ENCODE measurements at regions of chr22 and their contacts with region 1.

Region 1: GRCh38 chr22:35631597-35631996 is 14.5 kb upstream of the MB start:
- DNase-seq: peak; percentile 47 to 85
- H3K4me3 ChIP-seq: no peak overlapping the region
- H3K27ac ChIP-seq: no peak overlapping the region
- H3K4me1 ChIP-seq: peaks cover 0 to 18% (median 7%) of the 10 kb centered on the region in 4 experiments; a peak in 6 of 7 replicates
- H3K27me3 ChIP-seq: peaks cover 0 to 2% (median 0%) of the 10 kb centered on the region in 4 experiments; a peak in 1 of 7 replicates
- CTCF ChIP-seq: peak; percentile 87 to 98 (median 98)
- EP300 ChIP-seq: no peak
- POLR2A ChIP-seq: no peak
- RAD21 ChIP-seq: peak; percentile 89 to 94

Region 2: DNA sequence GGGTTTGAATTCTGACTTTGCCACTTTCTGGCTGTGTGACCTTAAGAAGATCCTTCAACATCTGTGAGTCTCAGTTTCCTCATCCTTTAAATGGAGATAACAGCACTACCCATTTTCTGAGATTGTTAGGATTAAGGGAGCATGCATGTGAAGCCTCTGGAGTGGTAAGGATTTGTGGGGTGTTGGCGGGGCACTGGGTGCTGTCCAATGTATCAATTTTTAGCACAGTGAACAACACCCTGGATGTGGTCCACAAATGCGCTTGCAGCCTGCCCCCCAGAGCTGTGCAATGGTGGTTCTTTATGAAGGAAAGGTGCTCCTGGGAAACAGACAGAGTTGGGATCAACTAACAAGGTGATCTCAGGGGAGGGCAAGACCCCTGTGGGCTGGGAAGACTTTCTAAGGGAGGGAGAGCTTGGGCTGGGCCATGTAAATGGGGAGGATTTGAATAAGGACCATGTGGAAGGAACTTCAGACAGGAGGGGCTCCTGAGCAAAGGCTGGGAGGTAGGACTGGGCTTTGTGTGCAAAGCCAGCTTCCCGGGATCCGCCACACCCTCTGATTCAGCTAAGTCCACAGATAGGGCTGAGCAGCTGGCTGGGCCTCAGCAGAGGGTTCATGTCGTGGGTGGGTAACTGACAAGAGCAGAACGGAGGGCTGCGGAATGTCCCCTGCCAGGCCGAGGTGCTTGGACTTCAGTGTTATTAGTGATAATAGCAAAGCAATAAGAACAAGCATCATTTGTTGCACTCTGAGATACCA is 113.6 kb before region 1 on chr22:
- CTCF ChIA-PET with region 1: no interaction called
- POLR2A ChIA-PET with region 1: no interaction called
- DNase-seq: no peak
- H3K4me3 ChIP-seq: no peak overlapping the region
- H3K27ac ChIP-seq: no peak overlapping the region
- H3K4me1 ChIP-seq: peaks cover 0 to 6% (median 3%) of the 10 kb centered on the region in 4 experiments; a peak in 5 of 7 replicates
- H3K27me3 ChIP-seq: no peaks in the 10 kb centered on the region; a peak in 1 of 7 replicates
- CTCF ChIP-seq: no peak
- EP300 ChIP-seq: no peak
- POLR2A ChIP-seq: no peak
- RAD21 ChIP-seq: no peak

Region 3: DNA sequence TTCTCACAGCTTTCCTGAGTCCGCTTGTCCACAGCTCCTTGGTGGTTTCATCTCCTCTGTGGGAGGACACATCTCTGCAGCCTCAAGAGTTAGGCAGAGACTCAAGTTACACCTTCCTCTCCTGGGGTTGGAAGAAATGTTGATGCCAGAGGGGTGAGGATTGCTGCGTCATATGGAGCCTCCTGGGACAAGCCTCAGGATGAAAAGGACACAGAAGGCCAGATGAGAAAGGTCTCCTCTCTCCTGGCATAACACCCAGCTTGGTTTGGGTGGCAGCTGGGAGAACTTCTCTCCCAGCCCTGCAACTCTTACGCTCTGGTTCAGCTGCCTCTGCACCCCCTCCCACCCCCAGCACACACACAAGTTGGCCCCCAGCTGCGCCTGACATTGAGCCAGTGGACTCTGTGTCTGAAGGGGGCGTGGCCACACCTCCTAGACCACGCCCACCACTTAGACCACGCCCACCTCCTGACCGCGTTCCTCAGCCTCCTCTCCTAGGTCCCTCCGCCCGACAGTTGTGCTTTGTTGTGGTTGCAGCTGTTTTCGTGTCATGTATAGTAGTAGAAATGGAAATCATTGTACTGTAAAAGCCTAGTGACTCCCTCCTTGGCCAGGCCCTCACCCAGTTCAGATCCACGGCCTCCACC is 79.3 kb before region 1 on chr22:
- CTCF ChIA-PET with region 1: no interaction called
- POLR2A ChIA-PET with region 1: no interaction called
- DNase-seq: peak in 1 of 2 experiments; percentile 94
- H3K4me3 ChIP-seq: no peak overlapping the region
- H3K27ac ChIP-seq: no peak overlapping the region
- H3K4me1 ChIP-seq: peaks cover 0 to 23% (median 11%) of the 10 kb centered on the region in 4 experiments; a peak in 6 of 7 replicates
- H3K27me3 ChIP-seq: no peaks in the 10 kb centered on the region; a peak in 1 of 7 replicates
- CTCF ChIP-seq: no peak
- EP300 ChIP-seq: no peak
- POLR2A ChIP-seq: no peak
- RAD21 ChIP-seq: no peak

Region 4: DNA sequence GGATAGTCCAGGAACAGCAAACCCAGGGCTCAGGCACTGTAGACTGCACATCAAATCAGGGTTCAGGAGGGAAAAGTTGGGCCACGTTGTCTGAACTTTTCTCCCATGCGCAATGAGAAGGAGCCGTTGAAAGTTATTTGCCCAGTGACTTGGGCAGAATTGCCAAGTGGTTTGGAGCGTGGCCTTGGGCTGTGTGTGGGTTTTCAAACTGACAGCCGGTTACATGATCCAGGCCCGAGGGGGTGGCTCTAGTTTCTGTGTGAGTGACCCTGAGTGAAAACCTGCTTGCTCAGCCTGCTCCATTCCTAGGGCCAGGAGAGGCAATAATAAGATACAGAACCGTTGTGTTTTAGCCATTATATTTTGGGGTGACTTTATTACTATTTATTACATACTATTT is 34.8 kb before region 1 on chr22:
- CTCF ChIA-PET with region 1: no interaction called
- POLR2A ChIA-PET with region 1: no interaction called
- DNase-seq: no peak
- H3K4me3 ChIP-seq: no peak overlapping the region
- H3K27ac ChIP-seq: no peak overlapping the region
- H3K4me1 ChIP-seq: peaks cover 0 to 13% (median 1%) of the 10 kb centered on the region in 4 experiments; a peak in 3 of 7 replicates
- H3K27me3 ChIP-seq: no peaks in the 10 kb centered on the region
- CTCF ChIP-seq: no peak
- EP300 ChIP-seq: no peak
- POLR2A ChIP-seq: no peak
- RAD21 ChIP-seq: no peak

Region 5: GRCh38 chr22:35641494-35642120 is 10.0 kb after region 1 on chr22:
- CTCF ChIA-PET with region 1: interaction called, 19 read pairs
- POLR2A ChIA-PET with region 1: interaction called, 3 read pairs
- DNase-seq: peak in 1 of 2 experiments; percentile 40
- H3K4me3 ChIP-seq: no peak overlapping the region
- H3K27ac ChIP-seq: no peak overlapping the region
- H3K4me1 ChIP-seq: peaks cover 0 to 5% (median 2%) of the 10 kb centered on the region in 4 experiments; a peak in 3 of 7 replicates
- H3K27me3 ChIP-seq: no peaks in the 10 kb centered on the region; a peak in 1 of 7 replicates
- CTCF ChIP-seq: no peak
- EP300 ChIP-seq: no peak
- POLR2A ChIP-seq: no peak
- RAD21 ChIP-seq: no peak

Region 6: DNA sequence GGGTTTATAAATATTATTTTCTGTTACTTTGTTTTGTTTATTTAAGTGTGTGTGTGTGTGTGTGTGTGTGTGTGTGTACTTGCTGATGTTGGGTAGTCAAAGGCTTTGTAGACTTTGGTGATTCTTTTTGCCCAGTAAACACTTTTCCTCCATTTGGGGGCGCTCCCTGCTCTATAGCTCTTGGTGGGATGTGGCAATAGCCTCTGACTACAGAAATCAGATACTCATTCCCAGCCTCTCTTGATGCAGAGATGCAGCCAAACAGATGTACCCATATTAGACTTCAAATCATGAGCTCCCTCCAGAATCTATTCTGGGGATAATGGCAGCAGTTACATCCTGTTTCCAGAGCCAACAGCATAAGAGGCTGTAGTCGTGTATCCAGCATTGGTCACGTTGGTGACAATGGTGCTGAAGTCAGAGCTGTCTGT is 52.7 kb after region 1 on chr22:
- CTCF ChIA-PET with region 1: interaction called, 25 read pairs
- POLR2A ChIA-PET with region 1: no interaction called
- DNase-seq: peak in 1 of 2 experiments; percentile 61
- H3K4me3 ChIP-seq: no peak overlapping the region
- H3K27ac ChIP-seq: no peak overlapping the region
- H3K4me1 ChIP-seq: no peaks in the 10 kb centered on the region
- H3K27me3 ChIP-seq: no peaks in the 10 kb centered on the region
- CTCF ChIP-seq: peak; percentile 22 to 60 (median 57)
- EP300 ChIP-seq: no peak
- POLR2A ChIP-seq: no peak
- RAD21 ChIP-seq: peak; percentile 68 to 76

Region 7: GRCh38 chr22:35739076-35739930 is 107.7 kb after region 1 on chr22:
- CTCF ChIA-PET with region 1: interaction called, 30 read pairs
- POLR2A ChIA-PET with region 1: no interaction called
- DNase-seq: no peak
- H3K4me3 ChIP-seq: no peak overlapping the region
- H3K27ac ChIP-seq: no peak overlapping the region
- H3K4me1 ChIP-seq: no peaks in the 10 kb centered on the region
- H3K27me3 ChIP-seq: no peaks in the 10 kb centered on the region
- CTCF ChIP-seq: peak; percentile 20 to 62 (median 41)
- EP300 ChIP-seq: no peak
- POLR2A ChIP-seq: no peak
- RAD21 ChIP-seq: peak; percentile 42 to 57; a peak in 3 of 4 replicates

Region 8: DNA sequence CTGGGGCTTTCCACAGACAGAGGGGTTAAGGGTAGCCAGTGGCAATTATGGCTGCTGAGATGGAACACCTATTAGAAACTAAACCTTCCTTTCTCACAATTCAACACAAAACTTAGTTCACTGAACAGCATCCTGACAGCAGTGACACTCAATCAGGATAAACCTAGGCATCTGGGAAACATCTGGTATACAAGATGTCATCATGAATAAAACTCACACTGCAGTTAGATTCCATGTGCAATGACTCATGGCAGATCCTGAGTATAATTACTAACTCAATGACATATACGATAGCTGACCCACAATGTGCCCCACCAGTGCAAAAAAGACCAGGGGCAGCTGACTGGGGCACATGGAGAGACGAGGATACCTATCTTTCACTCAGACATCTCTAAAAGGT is 379.3 kb after region 1 on chr22:
- CTCF ChIA-PET with region 1: no interaction called
- POLR2A ChIA-PET with region 1: no interaction called
- DNase-seq: no peak
- H3K4me3 ChIP-seq: 0 out of 8 replicates have a peak overlapping the region, but pooled peaks of 1 of the 4 experiments have one; percentile 21
- H3K27ac ChIP-seq: peak overlapping the region; percentile 29; the same call in 1 of the 2 replicates
- H3K4me1 ChIP-seq: peaks cover 3 to 17% (median 10%) of the 10 kb centered on the region in 4 experiments; a peak in 6 of 7 replicates
- H3K27me3 ChIP-seq: no peaks in the 10 kb centered on the region
- CTCF ChIP-seq: no peak
- EP300 ChIP-seq: no peak
- POLR2A ChIP-seq: no peak
- RAD21 ChIP-seq: no peak

Measured in H1 (cell line).